ENCODE measurements at regions of chr18 and their contacts with region 1.

Region 1: DNA sequence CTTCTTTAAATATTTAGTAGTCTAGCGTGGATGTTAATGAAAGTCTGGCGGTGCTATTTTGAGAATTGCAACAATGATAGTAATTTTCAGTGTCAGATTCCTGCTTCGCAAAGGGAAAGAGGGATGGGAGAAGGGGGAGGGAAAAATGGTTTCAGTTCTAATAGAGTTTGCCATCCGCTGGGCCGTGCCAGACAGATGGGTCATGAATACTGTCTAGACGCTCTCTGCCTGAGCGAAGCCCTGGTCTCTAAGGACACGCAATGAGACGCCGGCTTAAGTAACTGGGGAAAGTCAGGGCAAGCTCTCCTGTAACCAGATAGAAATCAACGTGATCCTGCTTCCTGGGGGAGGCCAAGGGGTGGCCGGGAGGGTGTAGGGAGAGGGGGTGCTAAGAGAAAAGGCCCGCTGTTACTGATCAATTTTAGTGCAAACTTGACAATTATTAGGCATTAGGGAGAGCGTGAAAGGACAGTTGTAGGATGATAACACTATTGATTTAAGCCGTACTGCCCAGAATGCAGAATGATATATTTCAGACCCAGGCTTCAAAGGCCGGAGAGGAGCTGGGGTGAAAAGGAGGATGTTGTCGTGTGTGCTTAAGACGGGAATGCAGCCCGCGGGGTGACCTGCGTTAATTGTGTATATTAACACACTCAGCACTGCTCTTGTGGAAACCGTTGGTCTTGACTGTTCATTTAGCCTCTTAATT is 229.2 kb downstream of the LDLRAD4 start:
- DNase-seq: no peak
- H3K4me3 ChIP-seq: peak overlapping the region in 58 of 59 donors; percentile 2 to 64 (median 39)
- H3K27ac ChIP-seq: peak overlapping the region in 17 of 59 donors; percentile 1 to 66 (median 39)
- H3K27me3 ChIP-seq: no peaks in the 10 kb centered on the region
- CTCF ChIP-seq: no peak

Region 2: GRCh38 chr18:13221869-13222855 is 225.6 kb before region 1 on chr18:
- intact Hi-C with region 1: loop called (anchors 5 kb)
- DNase-seq: peak in 5 of 10 donors; percentile 51 to 71 (median 56)
- H3K4me3 ChIP-seq: peak overlapping the region in 57 of 59 donors; percentile 5 to 92 (median 31)
- H3K27ac ChIP-seq: peak overlapping the region in 56 of 59 donors; percentile 2 to 89 (median 68)
- H3K27me3 ChIP-seq: no peaks in the 10 kb centered on the region
- CTCF ChIP-seq: peak in 3 of 56 donors; percentile 8 to 11 (median 9)

Region 3: GRCh38 chr18:13394801-13395200 is 53.0 kb before region 1 on chr18:
- intact Hi-C with region 1: loop called in 1 of 2 experiments (anchors 5 kb)
- DNase-seq: no peak
- H3K4me3 ChIP-seq: no peak overlapping the region
- H3K27ac ChIP-seq: no peak overlapping the region
- H3K27me3 ChIP-seq: no peaks in the 10 kb centered on the region
- CTCF ChIP-seq: no peak

Region 4: DNA sequence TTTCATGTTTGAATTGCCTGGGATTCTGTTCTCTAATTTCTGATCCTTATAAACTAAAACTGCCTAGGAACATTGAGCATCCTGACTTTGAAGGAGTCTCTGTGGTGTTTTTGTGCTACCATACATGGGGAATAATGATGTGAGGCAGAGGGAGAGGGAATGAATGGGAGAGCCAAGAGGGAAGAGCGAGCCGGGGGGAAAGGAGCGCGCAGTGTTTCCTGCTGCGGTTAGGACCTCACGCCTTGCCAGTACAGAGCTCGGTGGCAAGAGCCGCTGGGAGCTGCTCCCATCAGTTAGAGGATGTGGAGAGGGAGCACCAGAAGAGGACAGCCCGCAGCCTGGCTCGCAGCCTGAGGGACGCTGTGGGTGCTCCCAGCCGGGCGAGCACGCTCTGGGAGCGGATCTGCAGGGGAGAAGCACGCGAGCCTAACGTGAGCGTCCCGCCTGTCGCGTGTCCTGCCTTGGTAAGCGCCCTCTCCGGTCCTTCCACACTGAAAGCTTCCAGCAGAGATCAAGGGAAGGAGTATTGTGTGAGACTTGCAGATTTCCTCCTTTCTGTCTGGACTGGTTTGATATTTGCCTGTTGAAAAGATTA is 163.9 kb after region 1 on chr18:
- intact Hi-C with region 1: loop called in 1 of 2 experiments (anchors 10 kb)
- DNase-seq: peak in 8 of 10 donors; percentile 57 to 77 (median 74)
- H3K4me3 ChIP-seq: peak overlapping the region; percentile 39 to 78 (median 63)
- H3K27ac ChIP-seq: peak overlapping the region; percentile 81 to 99 (median 96)
- H3K27me3 ChIP-seq: no peaks in the 10 kb centered on the region
- CTCF ChIP-seq: peak in 5 of 56 donors; percentile 3 to 14 (median 6)

Measured in dorsolateral prefrontal cortex (tissue), 120 donors.